ENCODE measurements at regions of chr19 and their contacts with region 1.

Region 1: DNA sequence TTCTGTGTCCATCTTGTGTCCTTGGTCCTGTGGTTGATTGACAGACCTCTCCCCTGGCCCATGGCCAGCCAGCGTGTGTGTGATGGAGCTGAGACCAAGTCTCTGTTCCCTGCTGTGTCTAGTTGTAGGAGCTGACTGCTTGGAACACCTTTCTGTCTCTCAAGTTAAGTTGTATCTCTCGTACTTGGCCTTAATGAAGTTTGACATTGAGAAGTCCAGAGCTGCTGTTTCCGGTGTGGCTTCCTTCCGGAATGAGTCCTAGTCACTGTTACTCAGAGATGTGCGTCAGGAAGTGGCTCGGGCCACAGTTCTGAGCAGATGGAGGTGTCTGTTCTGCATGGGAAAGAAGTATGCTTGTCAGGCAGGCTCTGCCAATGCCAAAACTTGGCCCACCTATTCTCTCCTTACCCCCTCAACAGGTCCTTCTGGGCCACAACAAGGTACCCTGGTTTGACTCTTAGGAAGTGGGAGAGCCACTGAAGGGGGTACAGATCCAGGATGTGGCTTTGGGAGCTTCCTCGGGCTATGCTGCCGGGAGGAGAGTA is 54.3 kb downstream of the GATAD2A start:
- DNase-seq: no peak
- H3K4me3 ChIP-seq: peak overlapping the region in 1 of 3 donors; percentile 42
- H3K27ac ChIP-seq: peak overlapping the region; percentile 49 to 75
- H3K4me1 ChIP-seq: peaks cover 25 to 31% of the 10 kb centered on the region in 2 donors
- H3K27me3 ChIP-seq: no peaks in the 10 kb centered on the region
- CTCF ChIP-seq: no peak
- POLR2A ChIP-seq: no peak

Region 2: DNA sequence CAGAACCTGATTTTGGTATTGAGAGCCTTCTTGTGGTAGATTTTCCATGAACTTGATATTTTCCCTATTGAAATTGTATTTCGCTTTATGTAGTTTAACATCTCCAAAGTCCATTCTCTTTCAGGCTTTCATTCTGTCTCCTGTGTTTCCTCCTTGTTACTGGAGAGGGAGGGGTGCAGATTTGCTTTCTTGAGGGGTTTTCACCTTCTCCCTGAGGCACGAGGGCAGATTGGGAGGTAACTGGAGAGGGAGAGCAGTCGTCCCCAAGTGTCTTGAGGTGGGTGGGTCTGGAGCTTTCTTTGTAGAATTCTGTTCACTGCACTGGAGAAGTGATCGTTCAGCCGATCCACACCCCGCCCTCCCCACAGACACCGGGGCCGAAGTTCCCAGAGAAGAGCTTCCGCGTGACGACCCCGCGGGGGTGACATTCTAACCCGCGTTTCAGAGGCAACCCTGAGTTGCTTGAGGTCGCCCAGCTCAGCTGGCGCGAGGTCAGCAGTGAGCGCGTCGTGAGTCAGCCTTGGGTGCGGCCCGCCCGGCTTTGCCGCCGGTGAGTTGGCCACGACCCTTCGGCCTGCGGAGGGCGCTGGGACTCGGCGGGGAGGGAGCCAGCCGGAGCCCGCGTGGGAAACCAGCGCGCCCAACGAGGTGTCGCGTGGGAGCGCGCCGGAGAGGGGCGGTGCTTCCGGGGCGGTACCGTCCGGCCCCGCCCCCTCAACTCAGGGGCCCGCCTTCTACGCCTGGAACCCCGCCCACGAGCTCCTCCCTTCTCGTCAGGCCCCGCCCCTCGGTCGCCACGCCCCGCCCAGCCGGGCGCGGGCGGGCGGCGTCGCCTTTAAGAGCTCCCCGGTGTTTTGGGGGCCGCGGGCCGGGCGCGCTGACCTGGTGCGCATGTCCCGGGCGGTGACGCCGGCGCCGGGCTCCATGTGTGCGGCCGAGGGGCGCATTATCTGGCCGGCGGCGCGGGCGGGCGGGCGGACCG is 54.6 kb before region 1 on chr19 and contains the start of gene GATAD2A:
- intact Hi-C with region 1: no loop called
- DNase-seq: peak; percentile 89 to 93
- H3K4me3 ChIP-seq: peak within 1 kb of the TSS; percentile 86 to 97 (median 93)
- H3K27ac ChIP-seq: peak within 1 kb of the TSS; percentile 87 to 89
- H3K4me1 ChIP-seq: peaks cover 5 to 14% of the 10 kb centered on the region in 2 donors
- H3K27me3 ChIP-seq: no peaks in the 10 kb centered on the region
- CTCF ChIP-seq: no peak
- POLR2A ChIP-seq: no peak
- total RNA-seq, gene GATAD2A: 29.1 to 38.7 (median 33.6) TPM

Region 3: DNA sequence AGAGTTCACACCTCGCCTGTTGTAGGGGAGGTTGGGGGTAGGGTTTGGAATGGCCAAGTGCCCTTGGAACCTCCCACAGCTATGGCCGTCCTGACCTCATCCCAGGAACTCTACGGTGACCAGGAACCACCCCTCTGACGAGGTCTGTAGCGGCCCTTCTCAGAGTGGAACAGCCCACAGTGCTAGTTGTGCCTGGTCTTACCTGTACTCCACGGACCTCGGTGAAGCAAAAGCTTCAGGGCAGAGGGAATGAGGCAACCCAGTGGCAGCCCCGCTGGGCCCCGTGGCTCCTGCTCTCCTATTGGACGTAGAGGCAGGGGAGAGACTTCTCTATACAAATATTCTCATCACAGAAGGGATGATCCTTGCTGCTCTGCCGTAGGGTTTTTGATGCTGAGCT is 48.4 kb after region 1 on chr19:
- intact Hi-C with region 1: loop called (anchors 2 kb)
- DNase-seq: no peak
- H3K4me3 ChIP-seq: no peak overlapping the region
- H3K27ac ChIP-seq: no peak overlapping the region
- H3K4me1 ChIP-seq: no peaks in the 10 kb centered on the region
- H3K27me3 ChIP-seq: no peaks in the 10 kb centered on the region
- CTCF ChIP-seq: no peak
- POLR2A ChIP-seq: no peak

Region 4: DNA sequence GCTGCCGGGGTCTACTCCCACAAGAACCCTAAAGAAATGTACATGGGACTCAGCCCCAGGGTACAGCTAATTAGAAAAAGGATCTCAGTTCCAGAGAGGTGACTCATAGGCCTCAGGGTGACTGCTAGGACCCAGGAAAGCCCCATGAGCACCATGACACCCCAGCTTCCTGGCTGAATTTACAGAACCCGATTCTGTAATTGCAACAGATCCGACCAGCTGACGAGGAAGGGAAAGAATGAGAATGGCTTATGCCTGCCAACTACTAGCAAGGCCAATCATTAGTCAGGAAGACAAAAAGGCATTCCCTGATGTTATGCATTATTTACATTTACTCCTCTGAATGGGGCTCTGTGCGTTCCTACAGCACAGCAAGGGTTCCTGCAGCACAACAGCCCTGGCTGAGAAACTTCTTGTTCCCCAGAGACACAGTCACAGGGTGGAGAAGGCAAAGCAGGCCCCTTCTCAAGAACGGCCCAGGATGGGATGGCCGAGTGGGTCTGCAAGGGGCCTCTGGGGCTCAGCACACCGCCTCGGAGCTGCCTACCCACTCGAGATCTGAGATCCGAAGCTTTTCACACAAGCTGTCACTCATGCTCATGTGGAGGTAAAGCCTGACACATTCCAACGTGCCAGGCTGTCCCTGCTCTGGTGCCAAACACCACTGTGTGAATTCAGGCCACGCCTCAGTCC is 131.5 kb after region 1 on chr19:
- intact Hi-C with region 1: no loop called
- DNase-seq: peak in 1 of 2 donors; percentile 73
- H3K4me3 ChIP-seq: no peak overlapping the region
- H3K27ac ChIP-seq: peak overlapping the region; percentile 84 to 90
- H3K4me1 ChIP-seq: peaks cover 6 to 7% of the 10 kb centered on the region in 2 donors
- H3K27me3 ChIP-seq: no peaks in the 10 kb centered on the region
- CTCF ChIP-seq: no peak
- POLR2A ChIP-seq: no peak

Measured in breast epithelium (tissue), 4 donors.